Endothelial cell of umbilical vein (primary cell): ENCODE measurements at regions of chr3 and their contacts with region 1.

Region 1: GRCh38 chr3:152309535-152310307 is 41.0 kb downstream of the MBNL1 start:
- DNase-seq: no peak
- H3K4me3 ChIP-seq: no peak overlapping the region
- H3K27ac ChIP-seq: no peak overlapping the region
- H3K4me1 ChIP-seq: peaks cover 40% of the 10 kb centered on the region
- H3K27me3 ChIP-seq: no peaks in the 10 kb centered on the region
- CTCF ChIP-seq: no peak
- POLR2A ChIP-seq: no peak

Region 2: GRCh38 chr3:152298393-152299242 is 11.1 kb before region 1 on chr3:
- CTCF ChIA-PET with region 1: interaction called, 12 read pairs
- POLR2A ChIA-PET with region 1: interaction called, 7 read pairs
- dilution Hi-C with region 1: no loop called
- intact Hi-C with region 1: no loop called
- DNase-seq: peak; percentile 88
- H3K4me3 ChIP-seq: no peak overlapping the region
- H3K27ac ChIP-seq: peak overlapping the region; percentile 9
- H3K4me1 ChIP-seq: peaks cover 48% of the 10 kb centered on the region
- H3K27me3 ChIP-seq: no peaks in the 10 kb centered on the region
- CTCF ChIP-seq: no peak
- POLR2A ChIP-seq: no peak

Region 3: GRCh38 chr3:152319831-152320617 is 10.3 kb after region 1 on chr3:
- CTCF ChIA-PET with region 1: interaction called, 8 read pairs
- POLR2A ChIA-PET with region 1: interaction called, 3 read pairs
- dilution Hi-C with region 1: no loop called
- intact Hi-C with region 1: loop called (anchors 1 kb)
- DNase-seq: peak; percentile 99
- H3K4me3 ChIP-seq: no peak overlapping the region
- H3K27ac ChIP-seq: peak overlapping the region; percentile 83
- H3K4me1 ChIP-seq: peaks cover 96% of the 10 kb centered on the region
- H3K27me3 ChIP-seq: no peaks in the 10 kb centered on the region
- CTCF ChIP-seq: no peak
- POLR2A ChIP-seq: peak; percentile 84

Region 4: GRCh38 chr3:152405915-152406802 is 96.4 kb after region 1 on chr3:
- CTCF ChIA-PET with region 1: no interaction called
- POLR2A ChIA-PET with region 1: no interaction called
- dilution Hi-C with region 1: no loop called
- intact Hi-C with region 1: no loop called
- DNase-seq: no peak
- H3K4me3 ChIP-seq: no peak overlapping the region
- H3K27ac ChIP-seq: no peak overlapping the region
- H3K4me1 ChIP-seq: no peaks in the 10 kb centered on the region
- H3K27me3 ChIP-seq: no peaks in the 10 kb centered on the region
- CTCF ChIP-seq: no peak
- POLR2A ChIP-seq: no peak

Region 5: GRCh38 chr3:152825566-152825965 is 515.8 kb after region 1 on chr3:
- CTCF ChIA-PET with region 1: no interaction called
- POLR2A ChIA-PET with region 1: no interaction called
- dilution Hi-C with region 1: no loop called
- intact Hi-C with region 1: no loop called
- DNase-seq: no peak
- H3K4me3 ChIP-seq: no peak overlapping the region
- H3K27ac ChIP-seq: no peak overlapping the region
- H3K4me1 ChIP-seq: no peaks in the 10 kb centered on the region
- H3K27me3 ChIP-seq: peaks cover 0 to 2% of the 10 kb centered on the region in 2 experiments
- CTCF ChIP-seq: no peak
- POLR2A ChIP-seq: no peak